ENCODE measurements at regions of chr1 and their contacts with region 1.

Region 1: GRCh38 chr1:206716870-206717673 is 32.4 kb downstream of the MAPKAPK2 start:
- DNase-seq: peak; percentile 39
- H3K4me3 Mint-ChIP-seq: peak overlapping the region; percentile 52
- H3K27ac Mint-ChIP-seq: peak overlapping the region; percentile 83
- H3K4me1 Mint-ChIP-seq: peaks cover 74% of the 10 kb centered on the region
- H3K27me3 Mint-ChIP-seq: no peaks in the 10 kb centered on the region

Region 2: DNA sequence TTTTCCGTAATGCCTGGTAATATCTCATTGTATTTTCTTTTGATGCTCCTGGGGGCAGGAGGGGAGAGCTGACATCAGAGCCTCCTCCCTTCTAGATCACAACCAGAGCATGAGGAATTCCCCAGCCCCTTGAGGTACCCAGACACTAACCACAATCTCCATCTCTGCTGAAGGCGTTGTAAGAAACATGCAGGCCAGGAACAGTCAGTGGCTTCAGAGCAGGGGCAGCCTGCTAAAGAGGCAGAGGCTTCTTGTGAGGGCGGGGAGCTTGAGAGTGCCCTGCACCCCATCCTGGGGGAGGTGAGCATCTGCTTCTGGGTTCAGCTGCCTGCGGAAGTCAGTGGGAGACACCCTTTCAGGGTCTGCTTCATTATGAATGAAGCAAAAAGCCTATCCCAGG is 13.4 kb before region 1 on chr1:
- intact Hi-C with region 1: loop called (anchors 1 kb)
- DNase-seq: peak; percentile 50
- H3K4me3 Mint-ChIP-seq: peak overlapping the region; percentile 34
- H3K27ac Mint-ChIP-seq: peak overlapping the region; percentile 81
- H3K4me1 Mint-ChIP-seq: peaks cover 82% of the 10 kb centered on the region
- H3K27me3 Mint-ChIP-seq: no peaks in the 10 kb centered on the region

Region 3: DNA sequence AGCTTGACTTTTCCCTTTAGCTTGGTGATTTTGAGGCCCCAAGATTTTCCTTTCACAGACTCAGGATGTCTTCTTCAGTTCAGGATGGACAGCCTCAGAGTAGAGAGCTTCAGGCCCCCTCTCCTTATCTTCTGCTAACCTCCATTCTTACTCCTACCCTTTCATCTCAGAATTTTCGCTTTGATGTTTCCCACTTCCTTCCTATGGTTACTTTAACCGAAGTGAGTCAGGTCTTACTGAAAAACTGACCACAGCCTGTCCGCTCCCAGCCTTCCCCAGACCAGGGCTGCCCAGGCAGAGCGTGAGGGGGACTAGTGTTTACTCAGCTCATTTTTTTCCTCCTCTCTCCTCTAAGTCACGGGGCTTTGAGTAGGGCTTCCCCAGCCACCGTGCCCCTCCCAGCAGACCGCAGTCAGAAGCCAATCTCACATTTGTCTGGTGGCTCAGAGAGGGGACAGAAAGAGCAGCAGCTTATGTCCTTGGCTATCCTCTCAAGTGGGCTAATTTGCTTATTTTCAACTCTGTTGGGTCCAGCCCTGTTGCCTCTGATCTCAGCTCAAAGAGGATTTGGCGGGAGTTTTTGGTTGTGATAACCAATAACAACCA is 49.3 kb after region 1 on chr1:
- intact Hi-C with region 1: no loop called
- DNase-seq: peak; percentile 69
- H3K4me3 Mint-ChIP-seq: no peak overlapping the region
- H3K27ac Mint-ChIP-seq: peak overlapping the region; percentile 69
- H3K4me1 Mint-ChIP-seq: peaks cover 65% of the 10 kb centered on the region
- H3K27me3 Mint-ChIP-seq: peaks cover 6% of the 10 kb centered on the region

Measured in activated T-helper 2 cell treated with anti-CD3 and anti-CD28 coated beads, Interferon-gamma antibody, Interleukin-2, Interleukin-4, amounts not matched to agents 10 μg/mL and 5 μg/mL and 100 μg/mL, durations not matched to agents 14 hours and 24 hours and 36 hours (primary cell).